MCF 10A (cell line): ENCODE measurements at regions of chr3 and their contacts with region 1.

Region 1: DNA sequence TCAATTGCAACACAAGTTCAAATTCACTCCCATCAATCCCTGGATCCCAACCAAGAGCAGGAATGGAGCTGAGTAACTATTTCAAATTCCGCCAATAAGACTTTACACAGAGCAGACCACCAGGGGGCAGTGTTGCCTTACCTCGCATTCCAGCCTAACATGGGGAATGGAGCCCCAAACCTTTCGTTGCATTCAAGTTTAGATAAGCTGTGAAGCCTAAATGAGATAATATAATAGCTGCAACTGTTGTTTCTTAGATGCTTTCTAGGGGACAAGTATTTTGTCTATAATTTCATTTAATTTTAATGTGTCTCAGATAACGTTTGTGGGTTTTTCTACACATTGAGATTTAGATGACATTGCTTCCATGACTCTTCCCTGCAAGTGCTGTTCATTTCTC is 186.7 kb downstream of the NSUN3 start:
- DNase-seq: peak; percentile 81
- H3K4me3 Mint-ChIP-seq: no peak overlapping the region
- H3K27ac Mint-ChIP-seq: no peak overlapping the region
- H3K4me1 Mint-ChIP-seq: peaks cover 5% of the 10 kb centered on the region
- H3K27me3 Mint-ChIP-seq: peaks cover 77% of the 10 kb centered on the region
- CTCF ChIP-seq: peak; percentile 82

Region 2: GRCh38 chr3:94004301-94004910 is 245.2 kb before region 1 on chr3:
- CTCF ChIA-PET with region 1: no interaction called
- POLR2A ChIA-PET with region 1: no interaction called
- intact Hi-C with region 1: loop called (anchors 2 kb)
- DNase-seq: peak; percentile 65
- H3K4me3 Mint-ChIP-seq: peak overlapping the region; percentile 63
- H3K27ac Mint-ChIP-seq: peak overlapping the region; percentile 77
- H3K4me1 Mint-ChIP-seq: no peaks in the 10 kb centered on the region
- H3K27me3 Mint-ChIP-seq: no peaks in the 10 kb centered on the region
- CTCF ChIP-seq: peak; percentile 70

Region 3: GRCh38 chr3:94234177-94234788 is 15.3 kb before region 1 on chr3:
- CTCF ChIA-PET with region 1: interaction called, 30 read pairs
- POLR2A ChIA-PET with region 1: no interaction called
- intact Hi-C with region 1: no loop called
- DNase-seq: peak; percentile 55
- H3K4me3 Mint-ChIP-seq: no peak overlapping the region
- H3K27ac Mint-ChIP-seq: no peak overlapping the region
- H3K4me1 Mint-ChIP-seq: no peaks in the 10 kb centered on the region
- H3K27me3 Mint-ChIP-seq: no peaks in the 10 kb centered on the region
- CTCF ChIP-seq: peak; percentile 45

Region 4: DNA sequence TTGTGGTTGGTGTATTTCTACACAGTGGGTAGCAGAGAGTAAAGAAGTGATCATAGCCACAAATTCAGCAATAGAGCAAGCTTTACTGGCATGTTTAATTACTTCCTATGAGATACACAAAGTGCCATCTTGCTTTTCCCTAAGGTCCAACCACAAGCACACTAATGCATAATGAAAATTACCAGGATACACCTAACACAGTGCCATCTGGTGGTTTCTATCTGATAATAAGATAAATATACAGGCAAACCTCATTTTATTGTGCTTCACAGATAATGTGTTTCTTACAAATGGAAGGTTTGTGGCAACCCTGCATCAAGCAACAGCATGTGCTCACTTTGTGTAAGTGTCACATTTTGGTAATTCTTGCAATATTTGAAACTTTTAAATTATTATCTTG is 36.3 kb after region 1 on chr3:
- CTCF ChIA-PET with region 1: interaction called, 79 read pairs
- POLR2A ChIA-PET with region 1: no interaction called
- intact Hi-C with region 1: loop called (anchors 5 kb)
- DNase-seq: peak; percentile 42
- H3K4me3 Mint-ChIP-seq: no peak overlapping the region
- H3K27ac Mint-ChIP-seq: no peak overlapping the region
- H3K4me1 Mint-ChIP-seq: no peaks in the 10 kb centered on the region
- H3K27me3 Mint-ChIP-seq: no peaks in the 10 kb centered on the region
- CTCF ChIP-seq: peak; percentile 42

Region 5: DNA sequence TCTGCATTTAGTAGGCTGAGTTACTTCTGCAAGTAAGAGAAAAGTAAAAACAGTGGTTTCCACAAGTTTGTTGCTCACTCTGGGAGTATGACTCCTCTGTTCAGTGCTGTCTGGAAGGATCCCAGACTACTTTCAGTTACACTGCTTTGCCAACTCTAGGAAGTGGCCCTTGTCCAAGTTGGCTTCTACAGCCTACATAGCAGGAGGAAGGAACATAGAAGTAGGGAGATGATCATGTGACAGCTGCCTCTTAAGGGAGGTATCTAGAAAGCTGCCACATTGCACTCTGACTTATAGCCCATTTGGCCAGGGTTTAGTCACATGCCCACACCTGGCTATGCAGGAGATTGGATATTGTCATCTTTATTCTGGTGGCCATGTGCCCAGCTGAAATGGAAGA is 111.4 kb after region 1 on chr3:
- CTCF ChIA-PET with region 1: no interaction called
- POLR2A ChIA-PET with region 1: no interaction called
- intact Hi-C with region 1: no loop called
- DNase-seq: peak; percentile 43
- H3K4me3 Mint-ChIP-seq: no peak overlapping the region
- H3K27ac Mint-ChIP-seq: no peak overlapping the region
- H3K4me1 Mint-ChIP-seq: no peaks in the 10 kb centered on the region
- H3K27me3 Mint-ChIP-seq: peaks cover 10% of the 10 kb centered on the region
- CTCF ChIP-seq: no peak

Region 6: DNA sequence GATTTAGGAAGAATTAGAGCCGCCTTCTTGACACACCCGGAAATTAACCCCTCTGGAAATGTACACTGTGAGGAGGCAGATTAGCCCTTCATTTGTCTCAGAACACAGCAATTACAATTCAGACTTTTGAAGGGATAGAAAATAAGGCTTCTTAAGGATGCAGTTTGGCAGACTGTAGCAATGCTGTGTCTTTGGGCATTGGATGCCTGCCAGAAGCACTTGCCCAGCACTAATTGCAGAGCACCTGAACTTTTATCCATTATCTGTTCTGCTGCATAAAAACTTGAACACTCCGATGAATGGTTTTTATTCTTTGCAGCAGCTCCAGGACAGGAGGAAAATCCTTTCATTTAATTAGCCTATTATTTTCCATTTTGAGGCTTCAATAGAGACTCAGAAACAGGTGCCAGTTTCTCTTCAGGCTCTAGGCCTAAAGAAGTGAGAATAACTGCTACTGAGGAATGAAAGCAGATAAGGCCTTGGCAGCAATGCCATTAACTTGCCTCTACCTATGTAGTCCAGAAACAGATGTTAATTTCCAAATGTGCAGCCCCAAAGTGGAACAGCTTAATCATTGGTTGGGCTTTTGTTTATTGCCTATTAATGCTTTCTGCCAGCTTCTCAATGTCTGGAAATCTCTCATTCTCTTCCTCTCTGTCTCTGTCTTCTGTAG is 231.8 kb after region 1 on chr3:
- CTCF ChIA-PET with region 1: no interaction called
- POLR2A ChIA-PET with region 1: no interaction called
- intact Hi-C with region 1: no loop called
- DNase-seq: no peak
- H3K4me3 Mint-ChIP-seq: no peak overlapping the region
- H3K27ac Mint-ChIP-seq: no peak overlapping the region
- H3K4me1 Mint-ChIP-seq: no peaks in the 10 kb centered on the region
- H3K27me3 Mint-ChIP-seq: peaks cover 8% of the 10 kb centered on the region
- CTCF ChIP-seq: no peak

Region 7: GRCh38 chr3:94716326-94717010 is 466.9 kb after region 1 on chr3:
- CTCF ChIA-PET with region 1: interaction called, 3 read pairs
- POLR2A ChIA-PET with region 1: no interaction called
- intact Hi-C with region 1: loop called (anchors 1 kb)
- DNase-seq: peak; percentile 40
- H3K4me3 Mint-ChIP-seq: no peak overlapping the region
- H3K27ac Mint-ChIP-seq: no peak overlapping the region
- H3K4me1 Mint-ChIP-seq: no peaks in the 10 kb centered on the region
- H3K27me3 Mint-ChIP-seq: peaks cover 70% of the 10 kb centered on the region
- CTCF ChIP-seq: peak; percentile 10